SK-N-SH (cell line): ENCODE measurements at regions of chr1 and their contacts with region 1.

Region 1: DNA sequence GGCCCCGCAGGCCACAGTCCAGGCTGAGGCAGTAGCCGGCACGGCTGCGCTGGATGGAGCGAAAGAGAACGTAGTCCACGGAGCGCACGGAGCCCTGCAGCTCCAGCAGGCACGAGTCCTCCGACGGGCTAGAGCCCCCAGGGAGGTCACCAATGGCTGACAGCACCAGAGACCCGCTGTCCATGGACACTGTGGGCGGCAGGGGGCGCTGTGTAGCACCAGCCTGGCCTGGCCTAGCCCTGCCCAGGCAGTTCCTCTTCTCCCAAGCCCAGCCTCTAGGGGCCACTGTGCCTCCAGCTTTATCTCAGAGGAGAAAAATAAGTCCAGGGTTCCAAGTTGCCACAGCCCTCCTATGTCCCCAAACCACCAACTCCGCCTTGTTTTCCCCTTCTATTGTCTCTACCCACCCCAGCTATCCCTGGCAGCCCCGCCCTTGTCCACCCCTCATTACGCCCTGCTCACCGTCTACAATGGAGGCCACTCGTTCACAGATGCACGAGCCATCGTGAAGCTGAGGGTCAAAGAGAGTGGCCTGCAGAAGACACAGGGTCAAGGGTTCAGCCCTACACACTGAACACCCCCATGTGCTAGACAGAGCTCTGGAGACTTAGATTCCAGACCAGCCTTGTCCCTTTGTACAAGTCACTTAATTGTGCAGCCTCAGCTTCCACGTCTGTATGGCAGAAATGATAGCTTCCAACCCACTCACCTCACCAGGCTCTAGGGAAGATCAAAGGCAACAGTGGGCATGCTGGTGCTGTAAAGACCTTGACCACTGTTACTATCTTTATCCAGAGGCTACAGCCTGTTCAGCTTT is 4.4 kb downstream of the ENTREP3 start:
- DNase-seq: peak; percentile 98
- H3K4me3 ChIP-seq: peak overlapping the region in 1 of 2 experiments; percentile 52; a peak in 1 of 4 replicates
- H3K27ac ChIP-seq: peak overlapping the region; percentile 7 to 41; a peak in 2 of 4 replicates
- H3K4me1 ChIP-seq: peaks cover 0 to 17% of the 10 kb centered on the region in 2 experiments; a peak in 1 of 4 replicates
- H3K27me3 ChIP-seq: no peaks in the 10 kb centered on the region
- CTCF ChIP-seq: peak; percentile 99
- EP300 ChIP-seq: no peak
- RAD21 ChIP-seq: peak; percentile 90

Region 2: DNA sequence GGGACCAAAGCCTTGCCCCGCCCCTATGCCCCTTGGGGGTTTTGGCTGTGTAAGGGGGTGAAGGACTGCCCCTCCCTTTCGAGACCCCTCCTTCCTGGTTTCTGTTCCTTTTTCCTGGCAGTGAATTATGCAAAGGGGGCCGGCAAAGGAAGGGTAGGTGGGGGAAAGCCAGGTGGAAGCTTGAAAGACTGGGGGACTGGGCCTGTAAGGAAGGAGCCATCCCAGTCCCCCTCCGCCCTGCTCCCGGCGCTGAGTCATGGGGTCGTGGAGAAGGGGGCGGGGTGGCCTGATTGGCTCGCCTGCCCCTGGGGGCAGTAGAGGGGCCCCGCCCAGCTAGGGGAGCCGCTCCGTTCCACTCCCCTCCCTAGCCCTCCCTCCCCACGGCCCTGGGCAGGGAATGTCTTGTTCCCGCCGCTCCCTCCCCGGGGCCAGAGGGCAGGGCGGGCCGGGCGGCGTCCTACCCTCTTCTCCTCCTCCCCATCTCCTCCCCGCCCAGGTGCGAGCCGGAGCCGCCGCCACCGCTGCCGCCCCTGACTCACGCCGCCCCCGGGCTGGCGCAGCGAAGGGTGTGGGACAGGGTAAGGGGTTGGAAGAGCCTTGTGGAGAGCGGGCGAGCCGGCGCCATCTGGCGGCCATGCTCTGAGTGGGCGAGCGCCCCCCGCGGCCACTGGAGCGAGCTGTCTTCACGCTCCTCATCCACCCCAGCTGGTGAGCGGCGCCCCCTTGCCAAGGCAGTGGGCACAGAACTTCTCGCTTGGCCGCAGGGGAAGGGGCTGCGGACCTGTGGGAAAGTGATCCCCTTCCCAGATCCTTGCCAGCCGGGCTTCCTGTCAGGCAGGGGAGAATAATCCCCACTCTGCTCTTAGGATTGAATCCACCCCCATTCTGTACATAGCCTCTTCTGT is 233.5 kb before region 1 on chr1:
- CTCF ChIA-PET with region 1: no interaction called
- POLR2A ChIA-PET with region 1: no interaction called
- DNase-seq: peak; percentile 93
- H3K4me3 ChIP-seq: peak overlapping the region; percentile 20 to 51; a peak in 2 of 4 replicates
- H3K27ac ChIP-seq: no peak overlapping the region
- H3K4me1 ChIP-seq: peaks cover 0 to 6% of the 10 kb centered on the region in 2 experiments; a peak in 1 of 4 replicates
- H3K27me3 ChIP-seq: no peaks in the 10 kb centered on the region
- CTCF ChIP-seq: peak; percentile 86
- EP300 ChIP-seq: no peak
- RAD21 ChIP-seq: peak; percentile 67

Region 3: GRCh38 chr1:155208541-155209311 is 42.1 kb before region 1 on chr1 and contains the start of gene MTX1:
- CTCF ChIA-PET with region 1: interaction called, 23 read pairs
- POLR2A ChIA-PET with region 1: interaction called, 3 read pairs
- DNase-seq: peak; percentile 93
- H3K4me3 ChIP-seq: peak within 1 kb of the TSS; percentile 65 to 98
- H3K27ac ChIP-seq: peak within 1 kb of the TSS; percentile 93 to 98
- H3K4me1 ChIP-seq: peaks cover 0 to 29% of the 10 kb centered on the region in 2 experiments; a peak in 3 of 4 replicates
- H3K27me3 ChIP-seq: no peaks in the 10 kb centered on the region
- CTCF ChIP-seq: no peak
- EP300 ChIP-seq: peak; percentile 2 to 36; a peak in 1 of 4 replicates
- RAD21 ChIP-seq: no peak
- polyA plus RNA-seq, gene MTX1: 79.1 TPM in 2 replicates

Region 4: GRCh38 chr1:155277070-155277895 is 26.4 kb after region 1 on chr1 and contains the start of gene HCN3:
- CTCF ChIA-PET with region 1: interaction called, 126 read pairs
- POLR2A ChIA-PET with region 1: interaction called, 7 read pairs
- DNase-seq: peak; percentile 98
- H3K4me3 ChIP-seq: peak within 1 kb of the TSS; percentile 71 to 78
- H3K27ac ChIP-seq: peak within 1 kb of the TSS; percentile 25 to 66; a peak in 3 of 4 replicates
- H3K4me1 ChIP-seq: peaks cover 5 to 22% of the 10 kb centered on the region in 2 experiments; a peak in 2 of 4 replicates
- H3K27me3 ChIP-seq: no peaks in the 10 kb centered on the region
- CTCF ChIP-seq: peak; percentile 70
- EP300 ChIP-seq: no peak
- RAD21 ChIP-seq: peak; percentile 46
- polyA plus RNA-seq, gene HCN3: 9.7 and 10.1 TPM in 2 replicates

Region 5: DNA sequence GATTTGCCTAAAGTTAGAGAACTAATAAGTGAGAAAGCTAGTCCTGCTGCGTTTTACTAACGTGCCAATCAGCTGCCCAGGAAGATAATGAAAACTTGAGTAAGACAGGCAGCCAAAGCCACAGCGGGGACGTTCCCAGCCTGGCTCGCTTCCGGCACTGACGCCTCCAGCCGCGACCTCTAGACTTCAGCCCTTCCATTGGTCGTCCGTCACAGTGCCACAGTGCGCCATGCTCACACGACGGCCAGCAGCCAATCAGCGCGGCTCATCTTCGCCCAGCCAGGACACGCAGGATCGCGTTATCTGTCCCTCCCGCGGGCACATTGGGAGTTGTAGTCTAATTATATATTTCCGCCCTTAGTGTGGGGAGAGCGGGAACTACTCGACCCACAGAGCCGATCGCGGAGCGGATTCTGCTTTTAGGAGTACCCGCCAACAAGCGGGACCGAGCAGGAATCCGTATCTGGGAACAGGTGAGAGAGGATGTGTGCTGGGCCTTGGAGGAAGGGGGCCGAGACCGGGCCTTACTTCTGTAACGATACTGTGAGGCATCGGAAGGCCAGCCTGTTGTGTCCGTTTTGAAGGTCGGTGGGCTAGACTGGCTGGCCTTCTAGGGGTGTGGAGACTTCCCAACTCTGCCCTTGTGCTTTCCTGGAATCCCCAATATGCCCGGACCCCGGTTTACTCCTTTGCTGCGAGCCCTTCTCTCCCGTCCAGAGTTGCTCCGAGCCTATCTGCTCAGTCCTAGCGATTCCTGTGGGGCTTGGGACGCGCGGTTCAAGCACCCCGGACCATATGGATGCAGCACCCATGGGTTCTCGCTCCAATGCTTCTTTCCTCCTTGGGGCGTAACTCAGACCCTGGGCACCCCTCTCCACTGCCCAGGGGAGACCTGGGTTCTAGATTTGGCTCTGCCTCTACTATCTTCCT is 57.9 kb after region 1 on chr1 and contains the start of gene FDPS:
- CTCF ChIA-PET with region 1: interaction called, 51 read pairs
- POLR2A ChIA-PET with region 1: interaction called, 4 read pairs
- DNase-seq: peak; percentile 94
- H3K4me3 ChIP-seq: peak within 1 kb of the TSS; percentile 74 to 76
- H3K27ac ChIP-seq: peak within 1 kb of the TSS; percentile 79 to 92
- H3K4me1 ChIP-seq: peaks cover 0 to 10% of the 10 kb centered on the region in 2 experiments; a peak in 1 of 4 replicates
- H3K27me3 ChIP-seq: no peaks in the 10 kb centered on the region
- CTCF ChIP-seq: no peak
- EP300 ChIP-seq: no peak
- RAD21 ChIP-seq: no peak
- polyA plus RNA-seq, gene FDPS: 126 and 142 TPM in 2 replicates

Region 6: DNA sequence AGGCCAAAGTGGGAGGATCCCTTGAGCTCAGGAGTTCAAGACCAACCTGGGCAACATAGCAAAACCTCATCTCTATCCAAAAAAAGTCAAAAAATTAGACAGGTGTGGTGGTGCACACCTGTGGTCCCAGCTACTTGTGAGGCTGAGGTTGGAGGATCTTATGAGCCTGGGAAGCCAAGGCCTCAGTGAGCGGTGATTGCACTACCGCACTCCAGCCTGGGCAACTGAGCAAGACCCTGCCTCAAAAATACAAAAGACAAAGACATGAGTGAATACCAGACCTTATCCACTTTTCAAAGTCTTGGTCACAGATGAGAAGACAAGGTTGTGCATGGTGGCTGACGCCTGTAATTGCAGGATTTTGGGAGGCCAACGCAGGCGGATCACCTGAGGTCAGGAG is 346.0 kb after region 1 on chr1:
- CTCF ChIA-PET with region 1: interaction called, 13 read pairs
- POLR2A ChIA-PET with region 1: no interaction called
- DNase-seq: no peak
- H3K4me3 ChIP-seq: no peak overlapping the region
- H3K27ac ChIP-seq: no peak overlapping the region
- H3K4me1 ChIP-seq: no peaks in the 10 kb centered on the region; a peak in 1 of 4 replicates
- H3K27me3 ChIP-seq: no peaks in the 10 kb centered on the region
- CTCF ChIP-seq: no peak
- EP300 ChIP-seq: no peak
- RAD21 ChIP-seq: no peak